Activated CD8-positive, alpha-beta T cell treated with anti-CD3 and anti-CD28 coated beads for 36 hours (primary cell): ENCODE measurements at regions of chr17 and their contacts with region 1.

Region 1: GRCh38 chr17:7887482-7888183 is 956 bp upstream of the CHD3 start:
- DNase-seq: peak; percentile 98
- ATAC-seq: peak; percentile 79
- H3K4me3 Mint-ChIP-seq: no peak overlapping the region
- H3K27ac Mint-ChIP-seq: no peak overlapping the region
- H3K4me1 Mint-ChIP-seq: peaks cover 10% of the 10 kb centered on the region
- H3K27me3 Mint-ChIP-seq: no peaks in the 10 kb centered on the region
- CTCF ChIP-seq: no peak

Region 2: GRCh38 chr17:7844292-7845154 is 43.1 kb before region 1 on chr17:
- CTCF ChIA-PET with region 1: interaction called, 3 read pairs
- POLR2A ChIA-PET with region 1: interaction called, 3 read pairs
- intact Hi-C with region 1: loop called (anchors 5 kb)
- DNase-seq: peak; percentile 91
- ATAC-seq: peak; percentile 45
- H3K4me3 Mint-ChIP-seq: peak overlapping the region; percentile 83
- H3K27ac Mint-ChIP-seq: peak overlapping the region; percentile 98
- H3K4me1 Mint-ChIP-seq: peaks cover 45% of the 10 kb centered on the region
- H3K27me3 Mint-ChIP-seq: no peaks in the 10 kb centered on the region
- CTCF ChIP-seq: no peak

Region 3: DNA sequence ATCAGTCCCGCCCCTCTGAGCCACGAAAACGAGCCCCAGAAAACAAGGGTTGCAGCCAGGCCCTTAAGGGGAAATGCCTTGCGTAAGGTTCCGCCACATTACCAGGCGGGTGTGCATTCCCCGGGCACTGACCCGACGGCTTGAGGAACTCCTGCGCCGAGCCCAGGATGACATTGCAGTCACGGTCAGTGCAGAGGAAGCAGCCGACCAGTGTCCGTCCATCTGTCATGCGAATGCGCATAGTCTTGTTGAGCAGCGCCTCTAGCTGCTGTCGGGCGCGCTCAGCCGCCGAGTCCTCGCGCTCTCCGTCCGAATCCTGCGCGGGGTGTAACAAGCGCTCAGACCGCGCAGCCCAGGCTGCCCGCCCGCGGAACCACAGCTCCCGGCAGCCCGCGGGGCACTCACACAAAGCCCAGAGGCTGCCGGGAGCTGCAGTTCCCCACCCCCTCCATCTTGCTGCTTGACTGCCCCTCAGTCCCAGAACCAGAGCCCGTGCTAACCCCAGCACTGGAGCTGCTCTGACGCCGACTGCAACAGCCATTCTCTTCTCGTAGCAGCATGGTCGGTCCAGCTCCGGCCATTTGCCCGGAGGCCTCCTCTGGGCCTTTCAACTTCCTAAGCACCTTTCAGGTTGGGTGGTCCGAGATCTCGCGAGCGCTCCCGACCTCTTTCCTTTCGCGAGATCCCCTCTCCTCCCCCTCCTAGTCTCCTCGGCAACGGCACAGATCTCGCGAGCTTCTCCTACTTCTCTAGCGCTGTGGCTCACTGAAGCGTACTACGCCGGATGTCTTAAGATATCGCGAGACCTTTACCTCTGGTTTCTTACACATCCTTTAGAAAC is 30.5 kb before region 1 on chr17 and contains the start of gene NAA38:
- CTCF ChIA-PET with region 1: interaction called, 5 read pairs
- POLR2A ChIA-PET with region 1: interaction called, 16 read pairs
- intact Hi-C with region 1: no loop called
- DNase-seq: peak; percentile 98
- ATAC-seq: peak; percentile 90
- H3K4me3 Mint-ChIP-seq: no peak within 1 kb of the TSS
- H3K27ac Mint-ChIP-seq: no peak within 1 kb of the TSS
- H3K4me1 Mint-ChIP-seq: peaks cover 33% of the 10 kb centered on the region
- H3K27me3 Mint-ChIP-seq: no peaks in the 10 kb centered on the region
- CTCF ChIP-seq: no peak
- total RNA-seq, gene NAA38: 72.8 to 77.2 TPM

Region 4: GRCh38 chr17:7867881-7868329 is 19.7 kb before region 1 on chr17:
- CTCF ChIA-PET with region 1: interaction called, 10 read pairs
- POLR2A ChIA-PET with region 1: interaction called, 12 read pairs
- intact Hi-C with region 1: no loop called
- DNase-seq: no peak
- ATAC-seq: peak; percentile 74
- H3K4me3 Mint-ChIP-seq: peak overlapping the region; percentile 2
- H3K27ac Mint-ChIP-seq: peak overlapping the region; percentile 78
- H3K4me1 Mint-ChIP-seq: peaks cover 26% of the 10 kb centered on the region
- H3K27me3 Mint-ChIP-seq: no peaks in the 10 kb centered on the region
- CTCF ChIP-seq: no peak

Region 5: GRCh38 chr17:7873051-7873450 is 14.6 kb before region 1 on chr17:
- CTCF ChIA-PET with region 1: interaction called, 10 read pairs
- POLR2A ChIA-PET with region 1: interaction called, 12 read pairs
- intact Hi-C with region 1: no loop called
- DNase-seq: no peak
- ATAC-seq: no peak
- H3K4me3 Mint-ChIP-seq: no peak overlapping the region
- H3K27ac Mint-ChIP-seq: no peak overlapping the region
- H3K4me1 Mint-ChIP-seq: peaks cover 14% of the 10 kb centered on the region
- H3K27me3 Mint-ChIP-seq: no peaks in the 10 kb centered on the region
- CTCF ChIP-seq: no peak